Naive thymus-derived CD4-positive, alpha-beta T cell (primary cell): ENCODE measurements at regions of chr17 and their contacts with region 1.

Region 1: GRCh38 chr17:43316522-43317142 is 82.2 kb upstream of the ARL4D start:
- DNase-seq: peak in 2 of 9 donors; percentile 13 to 36
- ATAC-seq: no peak
- H3K4me3 ChIP-seq: no peak overlapping the region
- H3K4me3 Mint-ChIP-seq: peak overlapping the region in 5 of 10 donors; percentile 16 to 42 (median 25)
- H3K27ac ChIP-seq: no peak overlapping the region
- H3K27ac Mint-ChIP-seq: peak overlapping the region in 7 of 9 donors; percentile 38 to 79 (median 63)
- H3K4me1 ChIP-seq: no peaks in the 10 kb centered on the region
- H3K4me1 Mint-ChIP-seq: peaks cover 5 to 11% (median 7%) of the 10 kb centered on the region in 7 donors
- H3K27me3 ChIP-seq: no peaks in the 10 kb centered on the region
- H3K27me3 Mint-ChIP-seq: no peaks in the 10 kb centered on the region

Region 2: GRCh38 chr17:43211480-43212402 is 104.9 kb before region 1 on chr17 and contains the start of gene TMEM106A:
- CTCF ChIA-PET with region 1: interaction called, 3 read pairs
- POLR2A ChIA-PET with region 1: interaction called, 64 read pairs
- intact Hi-C with region 1: loop called (anchors 1 kb)
- DNase-seq: peak; percentile 50 to 72 (median 70)
- ATAC-seq: peak; percentile 93
- H3K4me3 ChIP-seq: peak within 1 kb of the TSS; percentile 89
- H3K4me3 Mint-ChIP-seq: peak within 1 kb of the TSS; percentile 89 to 100 (median 96)
- H3K27ac ChIP-seq: peak within 1 kb of the TSS; percentile 86
- H3K27ac Mint-ChIP-seq: peak within 1 kb of the TSS; percentile 89 to 98 (median 94)
- H3K4me1 ChIP-seq: peaks cover 15 to 17% of the 10 kb centered on the region in 2 donors
- H3K4me1 Mint-ChIP-seq: peaks cover 24 to 55% (median 46%) of the 10 kb centered on the region in 7 donors
- H3K27me3 ChIP-seq: no peaks in the 10 kb centered on the region
- H3K27me3 Mint-ChIP-seq: no peaks in the 10 kb centered on the region
- total RNA-seq, gene TMEM106A: 10.4 to 20.7 (median 13.9) TPM

Region 3: DNA sequence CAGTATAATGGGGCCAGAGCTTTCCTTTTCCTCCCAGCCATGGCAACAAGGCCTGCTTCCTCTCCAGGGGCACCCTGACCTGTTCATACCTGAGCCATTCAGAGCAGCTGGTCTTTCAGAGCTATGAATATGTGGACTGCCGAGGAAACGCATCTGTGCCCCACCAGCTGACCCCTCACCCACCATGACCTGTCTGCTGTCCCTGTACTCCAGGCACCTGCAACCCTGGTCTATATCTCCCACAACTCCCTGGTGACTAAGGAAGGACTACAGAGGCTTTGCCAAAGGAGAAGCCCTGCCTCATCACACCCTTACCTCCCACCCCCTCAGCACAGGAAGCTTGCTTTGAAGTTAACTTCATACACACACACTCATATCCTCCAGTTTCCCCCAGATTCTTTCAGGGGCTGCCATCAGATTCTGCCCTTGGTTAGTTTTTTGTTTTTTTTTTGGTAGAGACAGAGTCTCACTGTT is 99.0 kb before region 1 on chr17:
- CTCF ChIA-PET with region 1: no interaction called
- POLR2A ChIA-PET with region 1: interaction called, 64 read pairs
- intact Hi-C with region 1: no loop called
- DNase-seq: peak in 1 of 9 donors; percentile 3
- ATAC-seq: no peak
- H3K4me3 ChIP-seq: no peak overlapping the region
- H3K4me3 Mint-ChIP-seq: peak overlapping the region in 5 of 10 donors; percentile 5 to 73 (median 23)
- H3K27ac ChIP-seq: no peak overlapping the region
- H3K27ac Mint-ChIP-seq: peak overlapping the region; percentile 9 to 92 (median 63)
- H3K4me1 ChIP-seq: peaks cover 5 to 10% of the 10 kb centered on the region in 2 donors
- H3K4me1 Mint-ChIP-seq: peaks cover 16 to 50% (median 42%) of the 10 kb centered on the region in 7 donors
- H3K27me3 ChIP-seq: no peaks in the 10 kb centered on the region
- H3K27me3 Mint-ChIP-seq: no peaks in the 10 kb centered on the region

Region 4: GRCh38 chr17:43330876-43331639 is 14.4 kb after region 1 on chr17:
- CTCF ChIA-PET with region 1: interaction called, 36 read pairs
- POLR2A ChIA-PET with region 1: interaction called, 14 read pairs
- intact Hi-C with region 1: no loop called
- DNase-seq: no peak
- ATAC-seq: no peak
- H3K4me3 ChIP-seq: no peak overlapping the region
- H3K4me3 Mint-ChIP-seq: no peak overlapping the region
- H3K27ac ChIP-seq: no peak overlapping the region
- H3K27ac Mint-ChIP-seq: peak overlapping the region in 1 of 9 donors; percentile 41
- H3K4me1 ChIP-seq: peaks cover 4 to 5% of the 10 kb centered on the region in 2 donors
- H3K4me1 Mint-ChIP-seq: peaks cover 7 to 12% (median 9%) of the 10 kb centered on the region in 7 donors
- H3K27me3 ChIP-seq: no peaks in the 10 kb centered on the region
- H3K27me3 Mint-ChIP-seq: peaks cover 0 to 30% (median 16%) of the 10 kb centered on the region in 5 donors

Region 5: DNA sequence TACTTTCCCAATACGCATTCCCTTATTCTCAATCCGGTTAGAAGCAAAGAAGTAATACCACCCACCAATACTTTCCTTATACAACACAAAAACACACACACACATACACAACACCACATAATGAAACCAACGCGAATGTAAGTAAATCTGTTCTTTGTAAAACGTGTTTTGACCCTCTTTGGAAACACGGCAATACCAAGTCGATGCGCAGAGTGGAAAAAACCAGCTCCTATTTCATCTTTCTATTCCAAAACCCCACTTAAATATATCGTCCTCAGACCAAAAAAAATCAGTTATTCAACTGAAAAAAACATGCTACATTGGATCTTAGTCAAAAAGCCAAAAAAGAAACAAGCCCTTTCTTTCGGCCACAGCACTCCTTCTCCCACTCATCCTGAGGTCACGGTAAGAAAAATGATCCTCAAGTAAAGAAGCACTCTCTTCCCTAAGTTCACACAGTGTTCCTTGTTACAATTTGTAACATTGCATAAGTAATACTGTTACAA is 51.2 kb after region 1 on chr17:
- CTCF ChIA-PET with region 1: no interaction called
- POLR2A ChIA-PET with region 1: interaction called, 89 read pairs
- intact Hi-C with region 1: loop called in 1 of 2 experiments (anchors 2 kb)
- DNase-seq: peak in 4 of 9 donors; percentile 31 to 80 (median 70)
- ATAC-seq: peak; percentile 72
- H3K4me3 ChIP-seq: peak overlapping the region; percentile 75
- H3K4me3 Mint-ChIP-seq: peak overlapping the region; percentile 85 to 99 (median 92)
- H3K27ac ChIP-seq: peak overlapping the region; percentile 93
- H3K27ac Mint-ChIP-seq: peak overlapping the region; percentile 99 to 100 (median 100)
- H3K4me1 ChIP-seq: peaks cover 8 to 19% of the 10 kb centered on the region in 2 donors
- H3K4me1 Mint-ChIP-seq: peaks cover 31 to 65% (median 59%) of the 10 kb centered on the region in 7 donors
- H3K27me3 ChIP-seq: no peaks in the 10 kb centered on the region
- H3K27me3 Mint-ChIP-seq: no peaks in the 10 kb centered on the region

Region 6: GRCh38 chr17:43388359-43389045 is 71.9 kb after region 1 on chr17:
- CTCF ChIA-PET with region 1: no interaction called
- POLR2A ChIA-PET with region 1: interaction called, 7 read pairs
- intact Hi-C with region 1: loop called in 1 of 2 experiments (anchors 1 kb)
- DNase-seq: peak; percentile 92 to 98 (median 95)
- ATAC-seq: peak; percentile 84
- H3K4me3 ChIP-seq: peak overlapping the region; percentile 94
- H3K4me3 Mint-ChIP-seq: peak overlapping the region; percentile 91 to 99 (median 96)
- H3K27ac ChIP-seq: peak overlapping the region; percentile 95
- H3K27ac Mint-ChIP-seq: peak overlapping the region; percentile 95 to 100 (median 98)
- H3K4me1 ChIP-seq: peaks cover 4 to 15% of the 10 kb centered on the region in 2 donors
- H3K4me1 Mint-ChIP-seq: peaks cover 16 to 39% (median 31%) of the 10 kb centered on the region in 7 donors
- H3K27me3 ChIP-seq: no peaks in the 10 kb centered on the region
- H3K27me3 Mint-ChIP-seq: no peaks in the 10 kb centered on the region